Activated CD4-positive, alpha-beta memory T cell treated with anti-CD3 and anti-CD28 coated beads for 36 hours (primary cell): ENCODE measurements at regions of chr9 and their contacts with region 1.

Region 1: DNA sequence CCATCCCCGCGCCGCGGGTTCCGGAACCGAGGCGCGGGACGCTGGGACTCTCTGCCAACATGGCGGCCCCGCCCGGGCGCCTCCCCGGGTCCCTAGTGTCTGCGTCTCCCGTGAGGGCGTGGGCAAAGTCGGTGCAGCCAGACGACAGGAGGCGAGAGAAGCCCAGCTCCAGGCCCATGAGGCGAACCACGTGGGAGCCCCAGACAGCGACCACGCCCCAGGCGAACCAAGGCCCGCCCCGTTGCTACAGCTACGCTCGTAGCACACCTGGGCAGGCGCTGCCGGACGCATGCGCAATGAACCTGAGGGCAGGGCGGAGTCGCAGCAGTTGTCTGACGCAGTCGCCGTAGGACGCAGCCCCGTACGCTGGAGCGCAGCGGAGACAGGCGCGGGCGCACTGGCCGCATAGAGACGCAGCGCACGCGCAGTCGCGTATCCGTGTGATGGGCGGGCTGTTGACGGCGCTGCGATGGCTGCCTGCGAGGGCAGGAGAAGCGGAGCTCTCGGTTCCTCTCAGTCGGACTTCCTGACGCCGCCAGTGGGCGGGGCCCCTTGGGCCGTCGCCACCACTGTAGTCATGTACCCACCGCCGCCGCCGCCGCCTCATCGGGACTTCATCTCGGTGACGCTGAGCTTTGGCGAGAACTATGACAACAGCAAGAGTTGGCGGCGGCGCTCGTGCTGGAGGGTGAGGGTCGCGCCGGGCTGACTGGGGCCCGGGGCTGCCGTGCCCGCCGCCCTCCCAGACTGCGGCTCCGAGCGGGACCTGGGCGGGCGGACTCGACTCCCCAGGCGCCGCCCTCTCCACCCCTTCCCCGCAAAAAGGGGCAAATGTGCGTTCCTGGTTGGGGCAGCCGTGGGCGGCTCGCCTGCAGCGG is at the start of gene MAN1B1:
- DNase-seq: peak; percentile 100
- H3K4me3 Mint-ChIP-seq: peak within 1 kb of the TSS; percentile 88
- H3K27ac Mint-ChIP-seq: peak within 1 kb of the TSS; percentile 92
- H3K4me1 Mint-ChIP-seq: peaks cover 40% of the 10 kb centered on the region
- H3K27me3 Mint-ChIP-seq: no peaks in the 10 kb centered on the region
- total RNA-seq, gene MAN1B1: 32.9 to 33.1 TPM

Region 2: GRCh38 chr9:136849038-136849959 is 237.5 kb before region 1 on chr9 and contains the start of gene PHPT1:
- CTCF ChIA-PET with region 1: no interaction called
- POLR2A ChIA-PET with region 1: no interaction called
- intact Hi-C with region 1: loop called (anchors 5 kb)
- DNase-seq: peak; percentile 98
- H3K4me3 Mint-ChIP-seq: peak within 1 kb of the TSS; percentile 85
- H3K27ac Mint-ChIP-seq: peak within 1 kb of the TSS; percentile 90
- H3K4me1 Mint-ChIP-seq: peaks cover 19% of the 10 kb centered on the region
- H3K27me3 Mint-ChIP-seq: peaks cover 17% of the 10 kb centered on the region
- total RNA-seq, gene PHPT1: 92.2 to 95.5 TPM

Region 3: GRCh38 chr9:136978073-136978864 is 108.5 kb before region 1 on chr9:
- CTCF ChIA-PET with region 1: no interaction called
- POLR2A ChIA-PET with region 1: no interaction called
- intact Hi-C with region 1: no loop called
- DNase-seq: peak; percentile 77
- H3K4me3 Mint-ChIP-seq: no peak overlapping the region
- H3K27ac Mint-ChIP-seq: no peak overlapping the region
- H3K4me1 Mint-ChIP-seq: peaks cover 17% of the 10 kb centered on the region
- H3K27me3 Mint-ChIP-seq: peaks cover 1% of the 10 kb centered on the region

Region 4: GRCh38 chr9:137046098-137046787 is 40.5 kb before region 1 on chr9 and contains the start of gene NPDC1:
- CTCF ChIA-PET with region 1: interaction called, 26 read pairs
- POLR2A ChIA-PET with region 1: no interaction called
- intact Hi-C with region 1: no loop called
- DNase-seq: peak; percentile 90
- H3K4me3 Mint-ChIP-seq: peak within 1 kb of the TSS; percentile 67
- H3K27ac Mint-ChIP-seq: no peak within 1 kb of the TSS
- H3K4me1 Mint-ChIP-seq: peaks cover 10% of the 10 kb centered on the region
- H3K27me3 Mint-ChIP-seq: peaks cover 34% of the 10 kb centered on the region
- total RNA-seq, gene NPDC1: 36.0 to 42.6 TPM

Region 5: DNA sequence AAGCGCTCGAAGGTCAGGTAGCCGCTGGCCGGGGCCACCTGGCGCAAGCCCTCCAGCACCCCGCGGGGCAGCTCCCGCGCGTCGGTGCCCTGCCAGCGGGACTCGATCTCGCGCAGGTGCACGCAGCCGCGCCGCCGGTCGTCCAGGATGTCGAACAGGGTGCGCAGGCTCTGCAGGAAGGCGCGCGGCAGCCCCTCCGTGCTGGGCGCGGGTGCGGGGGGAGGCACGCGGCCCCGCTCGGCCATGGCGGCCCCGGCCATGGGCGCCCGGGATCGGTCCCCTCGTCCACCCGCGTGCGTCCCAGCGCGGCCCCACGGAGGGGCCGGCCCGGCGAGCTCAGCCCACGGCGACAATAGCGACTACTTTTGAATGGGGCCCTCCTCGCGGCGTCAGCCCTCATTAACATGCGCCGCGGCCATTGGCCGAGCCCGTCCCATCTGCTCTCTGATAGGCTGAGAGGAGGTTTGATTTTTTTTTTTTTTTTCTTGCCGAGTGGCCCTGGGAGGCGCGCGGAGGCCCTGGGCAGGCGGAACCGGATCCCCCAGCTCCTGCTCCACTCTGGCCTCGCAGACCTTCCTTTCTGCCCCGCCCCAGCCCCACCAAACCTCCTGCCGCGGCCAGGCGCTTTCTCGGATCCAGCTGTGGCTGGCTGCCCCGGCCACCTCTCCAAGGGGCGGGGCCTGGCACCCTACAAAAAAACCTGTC is 16.4 kb before region 1 on chr9 and contains the start of gene SAPCD2:
- CTCF ChIA-PET with region 1: interaction called, 61 read pairs
- POLR2A ChIA-PET with region 1: interaction called, 27 read pairs
- intact Hi-C with region 1: loop called (anchors 2 kb)
- DNase-seq: peak; percentile 90
- H3K4me3 Mint-ChIP-seq: peak within 1 kb of the TSS; percentile 61
- H3K27ac Mint-ChIP-seq: no peak within 1 kb of the TSS
- H3K4me1 Mint-ChIP-seq: peaks cover 8% of the 10 kb centered on the region
- H3K27me3 Mint-ChIP-seq: no peaks in the 10 kb centered on the region
- total RNA-seq, gene SAPCD2: 6.4 to 6.6 TPM

Region 6: DNA sequence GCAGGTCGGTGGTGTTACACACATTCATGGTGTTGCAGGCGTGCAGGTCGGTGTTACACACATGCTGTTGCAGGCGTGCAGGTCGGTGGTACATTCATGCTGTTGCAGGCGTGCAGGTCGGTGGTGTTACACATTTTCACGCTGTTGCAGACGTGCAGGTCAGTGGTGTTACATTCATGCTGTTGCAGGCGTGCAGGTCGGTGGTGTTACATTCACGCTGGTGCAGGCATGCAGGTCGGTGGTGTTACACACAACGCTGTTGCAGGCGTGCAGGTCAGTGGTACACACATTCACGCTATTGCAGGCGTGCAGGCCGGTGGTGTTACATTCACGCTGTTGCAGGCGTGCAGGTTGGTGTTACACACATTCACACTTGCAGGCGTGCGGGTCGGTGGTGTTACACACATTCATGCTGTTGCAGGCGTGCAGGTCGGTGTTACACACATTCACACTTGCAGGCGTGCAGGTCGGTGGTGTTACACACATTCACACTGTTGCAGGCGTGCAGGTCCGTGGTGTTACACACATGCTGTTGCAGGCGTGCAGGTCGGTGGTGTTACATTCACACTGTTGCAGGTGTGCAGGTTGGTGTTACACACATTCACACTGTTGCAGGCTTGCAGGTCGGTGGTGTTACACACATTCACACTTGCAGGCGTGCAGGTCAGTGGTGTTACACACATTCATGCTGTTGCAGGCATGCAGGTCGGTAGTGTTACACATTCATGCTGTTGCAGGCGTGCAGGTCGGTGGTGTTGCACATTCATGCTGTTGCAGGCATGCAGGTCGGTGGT is 16.6 kb after region 1 on chr9:
- CTCF ChIA-PET with region 1: no interaction called
- POLR2A ChIA-PET with region 1: no interaction called
- intact Hi-C with region 1: no loop called
- DNase-seq: no peak
- H3K4me3 Mint-ChIP-seq: no peak overlapping the region
- H3K27ac Mint-ChIP-seq: no peak overlapping the region
- H3K4me1 Mint-ChIP-seq: no peaks in the 10 kb centered on the region
- H3K27me3 Mint-ChIP-seq: no peaks in the 10 kb centered on the region

Region 7: DNA sequence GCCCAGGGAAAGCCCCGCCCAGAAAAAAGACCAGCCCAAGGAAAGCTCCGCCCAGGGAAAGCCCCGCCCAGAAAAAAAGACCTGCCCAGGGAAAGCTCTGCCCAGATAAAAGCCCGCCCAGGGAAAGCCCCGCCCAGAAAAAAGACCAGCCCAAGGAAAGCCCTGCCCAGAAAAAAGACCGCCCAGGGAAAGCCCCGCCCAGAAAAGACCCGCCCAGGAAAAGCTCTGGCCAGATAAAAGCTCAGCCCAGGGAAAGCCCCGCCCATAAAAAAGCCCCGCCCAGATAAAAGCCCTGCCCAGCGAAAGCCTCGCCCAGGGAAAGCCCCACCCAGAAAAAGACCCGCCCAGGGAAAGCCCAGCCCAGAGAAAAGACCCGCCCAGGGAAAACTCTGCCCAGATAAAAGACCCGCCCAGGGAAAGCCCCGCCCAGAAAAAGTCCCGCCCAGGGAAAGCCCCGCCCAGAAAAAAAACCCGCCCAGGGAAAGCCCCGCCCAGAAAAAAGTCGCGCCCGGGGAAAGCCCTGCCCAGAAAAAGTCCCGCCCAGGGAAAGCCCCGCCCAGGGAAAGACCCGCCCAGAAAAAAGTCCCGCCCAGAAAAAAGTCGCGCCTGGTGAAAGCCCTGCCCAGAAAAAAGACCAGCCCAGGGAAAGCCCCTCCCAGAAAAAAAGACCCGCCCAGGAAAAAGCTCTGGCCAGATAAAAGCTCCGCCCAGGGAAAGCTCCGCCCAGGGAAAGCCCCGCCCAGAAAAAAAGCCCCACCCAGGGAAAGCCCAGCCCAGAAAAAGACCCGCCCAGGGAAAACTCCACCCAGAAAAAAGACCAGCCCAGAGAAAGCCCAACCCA is 64.1 kb after region 1 on chr9:
- CTCF ChIA-PET with region 1: no interaction called
- POLR2A ChIA-PET with region 1: no interaction called
- intact Hi-C with region 1: loop called (anchors 2 kb)
- DNase-seq: peak; percentile 85
- H3K4me3 Mint-ChIP-seq: no peak overlapping the region
- H3K27ac Mint-ChIP-seq: no peak overlapping the region
- H3K4me1 Mint-ChIP-seq: no peaks in the 10 kb centered on the region
- H3K27me3 Mint-ChIP-seq: peaks cover 8% of the 10 kb centered on the region

Region 8: GRCh38 chr9:137240861-137241489 is 154.2 kb after region 1 on chr9 and contains the start of gene TUBB4B:
- CTCF ChIA-PET with region 1: interaction called, 13 read pairs
- POLR2A ChIA-PET with region 1: interaction called, 11 read pairs
- intact Hi-C with region 1: no loop called
- DNase-seq: peak; percentile 99
- H3K4me3 Mint-ChIP-seq: peak within 1 kb of the TSS; percentile 88
- H3K27ac Mint-ChIP-seq: peak within 1 kb of the TSS; percentile 94
- H3K4me1 Mint-ChIP-seq: peaks cover 21% of the 10 kb centered on the region
- H3K27me3 Mint-ChIP-seq: no peaks in the 10 kb centered on the region
- total RNA-seq, gene TUBB4B: 320 to 325 TPM